MCF 10A (cell line): ENCODE measurements at regions of chr3 and their contacts with region 1.

Region 1: DNA sequence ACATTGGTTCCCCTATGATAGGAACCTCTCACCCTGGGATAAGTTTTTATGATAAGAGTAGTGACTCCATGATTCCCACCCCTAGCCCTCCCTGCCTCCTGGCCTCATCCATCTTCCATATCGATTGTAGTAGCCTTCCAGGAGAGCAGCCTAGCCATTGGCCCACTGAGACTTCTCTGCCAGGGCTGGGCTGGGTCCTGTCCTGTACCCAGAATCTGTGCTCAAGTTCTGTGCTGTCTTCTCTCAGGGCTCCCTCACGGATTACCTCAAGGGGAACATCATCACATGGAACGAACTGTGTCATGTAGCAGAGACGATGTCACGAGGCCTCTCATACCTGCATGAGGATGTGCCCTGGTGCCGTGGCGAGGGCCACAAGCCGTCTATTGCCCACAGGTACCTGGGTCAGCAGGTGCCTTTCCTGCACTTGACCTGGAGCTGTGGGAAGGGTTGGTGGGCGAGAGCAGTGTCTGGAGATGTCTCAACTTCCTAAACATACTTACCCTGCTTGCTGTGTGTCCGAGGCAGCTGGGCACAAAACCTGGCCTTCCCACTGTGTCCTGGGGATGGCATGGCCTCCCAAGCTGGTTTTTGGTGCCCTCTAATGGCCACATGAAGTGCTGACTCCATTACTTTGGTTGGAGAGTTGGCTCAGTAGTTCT is 16.6 kb upstream of the EXOG start:
- DNase-seq: peak; percentile 75
- H3K4me3 Mint-ChIP-seq: no peak overlapping the region
- H3K27ac Mint-ChIP-seq: no peak overlapping the region
- H3K4me1 Mint-ChIP-seq: no peaks in the 10 kb centered on the region
- H3K27me3 Mint-ChIP-seq: no peaks in the 10 kb centered on the region
- CTCF ChIP-seq: peak; percentile 90

Region 2: GRCh38 chr3:38117748-38118420 is 361.7 kb before region 1 on chr3:
- CTCF ChIA-PET with region 1: interaction called, 4 read pairs
- POLR2A ChIA-PET with region 1: no interaction called
- intact Hi-C with region 1: loop called (anchors 1 kb)
- DNase-seq: peak; percentile 65
- H3K4me3 Mint-ChIP-seq: no peak overlapping the region
- H3K27ac Mint-ChIP-seq: no peak overlapping the region
- H3K4me1 Mint-ChIP-seq: no peaks in the 10 kb centered on the region
- H3K27me3 Mint-ChIP-seq: peaks cover 12% of the 10 kb centered on the region
- CTCF ChIP-seq: peak; percentile 70

Region 3: GRCh38 chr3:38297947-38298711 is 181.4 kb before region 1 on chr3:
- CTCF ChIA-PET with region 1: interaction called, 10 read pairs
- POLR2A ChIA-PET with region 1: no interaction called
- intact Hi-C with region 1: no loop called
- DNase-seq: peak; percentile 23
- H3K4me3 Mint-ChIP-seq: no peak overlapping the region
- H3K27ac Mint-ChIP-seq: no peak overlapping the region
- H3K4me1 Mint-ChIP-seq: no peaks in the 10 kb centered on the region
- H3K27me3 Mint-ChIP-seq: no peaks in the 10 kb centered on the region
- CTCF ChIP-seq: peak; percentile 40

Region 4: DNA sequence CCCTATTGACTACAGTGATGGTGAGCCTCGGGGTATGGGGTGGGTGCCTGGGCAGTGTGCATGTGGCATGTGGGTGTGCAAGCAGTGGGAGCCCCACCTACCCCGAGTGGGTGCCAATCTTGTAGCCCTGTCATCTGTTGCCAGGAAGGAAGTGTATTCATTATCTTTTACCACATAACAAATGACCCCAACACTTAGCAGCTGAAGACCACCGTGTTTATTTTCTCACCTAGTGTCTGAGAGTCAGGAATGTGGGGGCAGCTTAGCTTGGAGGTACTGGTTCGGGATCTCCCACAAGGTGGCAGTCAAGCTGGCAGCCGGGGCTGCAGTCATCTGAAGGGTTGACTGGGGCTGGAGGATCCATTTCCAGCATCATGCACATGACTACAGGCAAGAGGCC is 111.3 kb before region 1 on chr3:
- CTCF ChIA-PET with region 1: interaction called, 12 read pairs
- POLR2A ChIA-PET with region 1: no interaction called
- intact Hi-C with region 1: no loop called
- DNase-seq: no peak
- H3K4me3 Mint-ChIP-seq: no peak overlapping the region
- H3K27ac Mint-ChIP-seq: no peak overlapping the region
- H3K4me1 Mint-ChIP-seq: no peaks in the 10 kb centered on the region
- H3K27me3 Mint-ChIP-seq: no peaks in the 10 kb centered on the region
- CTCF ChIP-seq: no peak

Region 5: GRCh38 chr3:38490281-38491030 is 10.9 kb after region 1 on chr3:
- CTCF ChIA-PET with region 1: interaction called, 15 read pairs
- POLR2A ChIA-PET with region 1: interaction called, 3 read pairs
- intact Hi-C with region 1: no loop called
- DNase-seq: no peak
- H3K4me3 Mint-ChIP-seq: no peak overlapping the region
- H3K27ac Mint-ChIP-seq: no peak overlapping the region
- H3K4me1 Mint-ChIP-seq: no peaks in the 10 kb centered on the region
- H3K27me3 Mint-ChIP-seq: no peaks in the 10 kb centered on the region
- CTCF ChIP-seq: no peak

Region 6: GRCh38 chr3:39107388-39108199 is 628.0 kb after region 1 on chr3 and contains the starts of genes GORASP1 and TTC21A:
- CTCF ChIA-PET with region 1: no interaction called
- POLR2A ChIA-PET with region 1: no interaction called
- intact Hi-C with region 1: no loop called
- DNase-seq: peak; percentile 84
- H3K4me3 Mint-ChIP-seq: peak within 1 kb of the TSS; percentile 94
- H3K27ac Mint-ChIP-seq: peak within 1 kb of the TSS; percentile 94
- H3K4me1 Mint-ChIP-seq: peaks cover 37% of the 10 kb centered on the region
- H3K27me3 Mint-ChIP-seq: no peaks in the 10 kb centered on the region
- CTCF ChIP-seq: no peak
- total RNA-seq, gene GORASP1: 34.4 and 40.7 TPM in 2 replicates
- total RNA-seq, gene TTC21A: 2.1 and 5.4 TPM in 2 replicates